ENCODE measurements at regions of chr10 and their contacts with region 1.

Region 1: DNA sequence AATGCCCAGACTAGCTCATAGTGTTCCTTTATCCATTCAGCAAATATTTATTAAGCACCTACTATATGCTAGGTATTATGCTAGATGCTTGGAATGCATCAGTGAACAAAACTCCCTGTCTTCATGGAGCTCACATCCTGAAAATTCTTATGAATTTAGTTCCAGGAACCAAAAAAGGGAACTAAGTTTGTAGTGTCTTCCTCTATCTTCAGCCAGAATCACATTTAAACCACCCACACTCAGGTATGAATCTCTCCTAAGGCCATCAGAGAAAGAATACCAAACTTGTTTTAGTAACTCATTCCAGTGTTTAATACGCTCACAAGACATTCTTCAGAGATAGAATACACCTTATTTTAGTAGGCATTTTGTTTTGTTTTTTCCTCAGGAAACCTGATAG is 10.1 kb upstream of the EGR2 start:
- DNase-seq: no peak
- ATAC-seq: no peak
- H3K4me3 ChIP-seq: no peak overlapping the region
- H3K27ac ChIP-seq: no peak overlapping the region
- H3K4me1 ChIP-seq: peaks cover 0 to 12% (median 0%) of the 10 kb centered on the region in 12 donors
- H3K27me3 ChIP-seq: no peaks in the 10 kb centered on the region
- CTCF ChIP-seq: no peak
- POLR2A ChIP-seq: no peak

Region 2: GRCh38 chr10:61937631-61938351 is 888.5 kb before region 1 on chr10:
- intact Hi-C with region 1: no loop called
- DNase-seq: no peak
- ATAC-seq: peak in 2 of 4 donors; percentile 26 to 48
- H3K4me3 ChIP-seq: no peak overlapping the region
- H3K27ac ChIP-seq: peak overlapping the region in 4 of 12 donors; percentile 16 to 87 (median 52)
- H3K4me1 ChIP-seq: peaks cover 0 to 65% (median 17%) of the 10 kb centered on the region in 12 donors
- H3K27me3 ChIP-seq: no peaks in the 10 kb centered on the region
- CTCF ChIP-seq: no peak
- POLR2A ChIP-seq: no peak

Region 3: GRCh38 chr10:62594093-62594520 is 232.2 kb before region 1 on chr10:
- intact Hi-C with region 1: loop called in 2 of 10 experiments (anchors 5 to 10 kb)
- DNase-seq: peak; percentile 51 to 79 (median 58)
- ATAC-seq: peak in 3 of 4 donors; percentile 83 to 94 (median 86)
- H3K4me3 ChIP-seq: no peak overlapping the region
- H3K27ac ChIP-seq: no peak overlapping the region
- H3K4me1 ChIP-seq: peaks cover 0 to 5% (median 0%) of the 10 kb centered on the region in 12 donors
- H3K27me3 ChIP-seq: no peaks in the 10 kb centered on the region
- CTCF ChIP-seq: peak; percentile 71 to 91 (median 86)
- POLR2A ChIP-seq: no peak

Region 4: GRCh38 chr10:62726142-62726541 is 100.1 kb before region 1 on chr10:
- intact Hi-C with region 1: no loop called
- DNase-seq: no peak
- ATAC-seq: no peak
- H3K4me3 ChIP-seq: no peak overlapping the region
- H3K27ac ChIP-seq: no peak overlapping the region
- H3K4me1 ChIP-seq: peaks cover 0 to 13% (median 0%) of the 10 kb centered on the region in 12 donors
- H3K27me3 ChIP-seq: peaks cover 0 to 2% (median 0%) of the 10 kb centered on the region in 9 donors
- CTCF ChIP-seq: no peak
- POLR2A ChIP-seq: no peak

Region 5: GRCh38 chr10:63071140-63071539 is 244.9 kb after region 1 on chr10:
- intact Hi-C with region 1: loop called in 1 of 10 experiments (anchors 10 kb)
- DNase-seq: no peak
- ATAC-seq: no peak
- H3K4me3 ChIP-seq: no peak overlapping the region
- H3K27ac ChIP-seq: no peak overlapping the region
- H3K4me1 ChIP-seq: no peaks in the 10 kb centered on the region
- H3K27me3 ChIP-seq: peaks cover 0 to 20% (median 2%) of the 10 kb centered on the region in 9 donors
- CTCF ChIP-seq: no peak
- POLR2A ChIP-seq: no peak

Region 6: DNA sequence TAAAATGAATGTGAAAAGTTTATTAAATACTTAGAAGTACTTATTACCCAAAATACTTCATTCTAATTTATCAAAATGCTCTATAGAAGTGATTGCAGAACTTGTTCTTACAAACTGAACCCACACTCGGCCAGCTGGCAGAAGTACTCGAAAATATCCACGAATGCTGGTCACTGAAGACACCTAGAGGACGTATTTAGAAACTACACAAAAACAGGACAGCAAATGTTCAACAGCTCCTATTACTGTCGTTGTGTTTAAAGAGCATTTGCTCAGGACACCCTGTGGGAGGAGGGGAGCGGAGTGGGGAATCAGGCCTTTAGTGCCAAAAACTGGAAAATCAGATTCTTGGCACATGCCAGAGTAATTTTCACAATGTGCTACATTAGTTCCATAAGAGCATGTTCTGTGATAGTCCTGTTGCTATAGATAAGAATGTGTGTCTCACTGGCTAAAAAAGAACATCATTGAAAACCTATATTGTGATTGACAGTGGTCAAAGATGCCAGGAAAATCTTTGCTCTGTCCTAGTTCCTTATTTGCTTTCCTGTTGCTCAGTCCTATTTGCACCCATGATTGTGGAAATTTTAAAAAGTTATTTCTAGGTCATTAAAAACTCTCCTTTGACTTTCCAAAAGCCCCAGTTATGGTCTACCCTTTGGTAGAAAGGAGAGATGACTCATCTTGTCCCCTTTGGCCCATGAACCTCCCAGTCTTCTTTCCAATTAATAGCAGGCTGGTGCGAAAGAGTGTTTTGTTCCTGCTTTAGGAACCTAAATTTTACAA is 257.8 kb after region 1 on chr10:
- intact Hi-C with region 1: loop called in 3 of 10 experiments (anchors 10 kb)
- DNase-seq: peak in 4 of 5 donors; percentile 53 to 74 (median 56)
- ATAC-seq: peak; percentile 64 to 94 (median 82)
- H3K4me3 ChIP-seq: no peak overlapping the region
- H3K27ac ChIP-seq: peak overlapping the region in 6 of 12 donors; percentile 6 to 54 (median 20)
- H3K4me1 ChIP-seq: peaks cover 0 to 14% (median 0%) of the 10 kb centered on the region in 12 donors
- H3K27me3 ChIP-seq: no peaks in the 10 kb centered on the region
- CTCF ChIP-seq: peak; percentile 52 to 78 (median 70)
- POLR2A ChIP-seq: no peak

Measured in heart left ventricle (tissue), 16 donors.